Panc1 (cell line): ENCODE measurements at regions of chr7 and their contacts with region 1.

Region 1: DNA sequence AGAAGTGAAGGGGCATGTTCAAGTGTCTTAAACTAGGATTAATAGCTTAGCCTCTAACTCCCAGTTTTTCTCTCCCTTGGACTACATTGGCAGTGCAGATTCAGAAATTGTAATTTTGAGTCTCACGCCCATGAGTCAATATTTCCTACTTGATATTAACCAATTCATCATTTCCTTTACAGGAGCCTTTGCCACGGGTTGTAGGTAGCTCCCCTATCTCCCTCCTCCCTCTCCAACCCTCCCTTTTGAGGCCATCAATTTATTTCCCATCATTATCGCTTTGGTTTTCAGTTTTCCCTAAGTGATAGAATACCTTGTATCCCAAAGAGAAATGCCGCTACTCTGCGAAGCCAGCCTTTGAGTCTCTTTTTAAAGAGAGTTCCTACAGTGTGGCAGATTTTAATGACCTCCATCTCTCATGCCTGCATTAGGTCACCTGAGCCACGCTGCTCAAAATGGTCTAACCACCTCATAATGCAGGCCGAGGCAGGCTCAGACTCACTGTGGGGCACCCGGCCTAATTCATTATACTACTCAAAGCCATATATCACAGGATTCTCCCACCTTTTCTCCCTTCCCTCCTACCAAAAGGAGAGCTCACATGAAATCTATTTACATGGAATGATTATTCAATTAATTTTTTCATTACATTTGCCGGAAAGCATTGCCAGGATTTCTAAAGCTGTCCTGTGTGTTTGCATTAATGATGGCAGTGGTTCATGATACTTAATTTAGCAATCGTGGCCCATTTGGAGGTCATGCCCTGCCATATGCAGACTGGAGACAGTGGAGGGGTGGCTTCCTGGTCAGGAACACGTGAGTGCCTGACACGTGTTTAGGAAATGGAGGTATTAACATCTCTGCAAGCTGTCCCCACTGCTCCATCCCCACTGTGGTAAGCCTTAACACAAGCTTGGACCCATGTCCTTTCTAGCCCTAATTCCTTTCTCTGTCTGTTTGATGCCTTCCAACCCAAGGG is 448.2 kb upstream of the AUTS2 start:
- DNase-seq: no peak
- ATAC-seq: no peak
- H3K4me3 ChIP-seq: no peak overlapping the region
- H3K27ac ChIP-seq: no peak overlapping the region
- H3K4me1 ChIP-seq: no peaks in the 10 kb centered on the region
- H3K27me3 ChIP-seq: no peaks in the 10 kb centered on the region
- CTCF ChIP-seq: no peak

Region 2: GRCh38 chr7:68853254-68853653 is 296.8 kb before region 1 on chr7:
- CTCF ChIA-PET with region 1: no interaction called
- POLR2A ChIA-PET with region 1: interaction called, 15 read pairs
- in situ Hi-C with region 1: no loop called
- intact Hi-C with region 1: no loop called
- DNase-seq: no peak
- ATAC-seq: no peak
- H3K4me3 ChIP-seq: no peak overlapping the region
- H3K27ac ChIP-seq: no peak overlapping the region
- H3K4me1 ChIP-seq: no peaks in the 10 kb centered on the region
- H3K27me3 ChIP-seq: no peaks in the 10 kb centered on the region
- CTCF ChIP-seq: no peak